ENCODE measurements at regions of chr2 and their contacts with region 1.

Region 1: DNA sequence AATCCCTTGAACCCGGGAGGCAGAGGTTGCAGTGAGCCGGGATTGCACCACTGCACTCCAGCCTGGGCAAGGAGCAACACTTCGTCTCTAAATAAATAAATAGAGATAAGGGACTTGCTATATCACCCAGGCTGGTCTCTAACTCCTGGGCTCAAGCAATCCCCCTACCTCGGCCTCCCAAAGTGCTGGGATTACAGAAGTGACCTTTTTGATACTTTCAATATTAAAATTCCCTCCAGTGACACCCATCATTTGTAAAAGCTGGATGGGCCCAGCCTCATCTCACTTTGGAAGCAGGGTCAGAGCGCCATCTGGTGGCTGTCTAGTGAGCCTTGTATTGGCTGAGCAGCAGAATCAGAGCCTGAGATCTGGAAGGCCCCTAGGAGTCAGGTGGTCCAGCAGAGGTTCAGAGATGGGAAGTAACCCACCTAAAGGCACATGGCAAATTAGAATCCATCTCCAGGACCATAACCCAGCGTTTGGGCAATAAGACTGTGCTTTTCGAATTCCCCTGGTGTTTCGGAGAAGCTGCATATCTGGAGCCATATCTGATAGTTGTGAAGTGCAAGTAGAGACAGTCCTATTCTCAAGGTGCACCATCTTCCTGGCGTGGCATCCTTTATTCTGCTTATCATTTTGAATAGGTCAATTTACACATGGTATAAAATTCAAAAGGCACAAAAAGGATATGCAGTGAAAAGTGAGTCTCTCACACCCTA is 18.3 kb upstream of the SLC35F6 start:
- DNase-seq: peak; percentile 84 to 88
- ATAC-seq: peak; percentile 89 to 94
- H3K4me3 ChIP-seq: no peak overlapping the region
- H3K27ac ChIP-seq: peak overlapping the region; percentile 53 to 94; a peak in 5 of 6 replicates
- H3K4me1 ChIP-seq: peaks cover 41% of the 10 kb centered on the region
- CTCF ChIP-seq: peak; percentile 99
- EP300 ChIP-seq: no peak
- POLR2A ChIP-seq: no peak
- RAD21 ChIP-seq: peak; percentile 100

Region 2: DNA sequence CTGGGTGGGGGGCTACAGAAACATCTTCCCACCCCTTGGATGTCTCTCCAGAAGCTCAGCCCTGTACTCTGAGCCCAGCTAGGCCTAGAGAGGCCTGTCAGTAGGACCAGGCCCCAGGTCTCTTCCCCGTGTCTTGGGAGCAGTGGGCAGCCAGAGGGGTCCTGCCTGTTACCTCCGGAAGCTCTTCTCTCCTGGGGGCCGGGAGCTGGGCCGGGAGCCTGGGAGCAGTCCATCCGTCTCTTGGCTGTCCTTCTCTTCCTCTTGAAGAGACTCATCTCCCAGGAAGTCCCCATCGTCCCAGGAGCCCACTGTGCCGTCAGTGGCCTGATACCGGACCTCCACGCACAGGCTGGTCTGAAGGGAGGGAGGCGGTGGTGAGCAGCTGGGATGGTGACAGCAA is 229.5 kb before region 1 on chr2:
- CTCF ChIA-PET with region 1: interaction called, 47 read pairs
- POLR2A ChIA-PET with region 1: no interaction called
- DNase-seq: no peak
- ATAC-seq: no peak
- H3K4me3 ChIP-seq: no peak overlapping the region
- H3K27ac ChIP-seq: no peak overlapping the region
- H3K4me1 ChIP-seq: no peaks in the 10 kb centered on the region
- CTCF ChIP-seq: no peak
- EP300 ChIP-seq: no peak
- POLR2A ChIP-seq: no peak
- RAD21 ChIP-seq: no peak

Region 3: DNA sequence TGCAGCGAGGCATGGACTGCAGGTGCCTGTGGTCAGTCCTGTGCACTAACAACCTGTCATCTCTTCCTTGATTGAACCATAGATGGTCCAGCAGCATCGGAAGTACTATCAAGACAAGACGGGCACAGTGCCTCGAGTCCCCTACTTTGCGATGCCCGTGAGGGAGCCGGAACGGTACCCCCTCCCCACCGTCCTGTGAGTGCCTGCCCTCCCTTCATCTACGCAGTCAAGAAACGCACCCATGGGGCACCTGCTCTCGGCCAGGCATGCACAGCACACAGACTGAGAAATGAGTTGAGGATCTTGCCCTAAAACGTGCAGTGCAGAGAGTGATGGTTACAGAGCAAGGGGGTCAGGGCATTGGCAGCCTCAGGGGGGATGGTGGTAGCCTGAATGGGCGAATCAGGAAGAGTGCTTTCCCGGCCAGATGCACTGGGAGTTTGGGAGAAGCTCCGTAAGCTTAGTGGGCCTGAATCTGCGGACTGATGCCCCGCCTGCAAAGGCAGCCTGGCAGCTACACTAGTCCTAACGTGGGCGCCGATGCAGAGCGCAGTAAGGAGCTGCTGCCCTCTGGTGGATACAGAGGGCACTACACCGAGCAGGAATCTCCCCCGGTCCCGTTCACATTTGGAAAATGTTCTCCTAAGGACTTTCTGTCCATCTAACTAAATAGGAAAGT is 168.2 kb before region 1 on chr2:
- CTCF ChIA-PET with region 1: interaction called, 175 read pairs
- POLR2A ChIA-PET with region 1: no interaction called
- DNase-seq: peak; percentile 71 to 95
- ATAC-seq: peak; percentile 73 to 93
- H3K4me3 ChIP-seq: no peak overlapping the region
- H3K27ac ChIP-seq: peak overlapping the region in 1 of 2 experiments; percentile 47; a peak in 3 of 6 replicates
- H3K4me1 ChIP-seq: peaks cover 4% of the 10 kb centered on the region; the same call in 2 of the 3 replicates
- CTCF ChIP-seq: peak; percentile 98
- EP300 ChIP-seq: no peak
- POLR2A ChIP-seq: no peak
- RAD21 ChIP-seq: peak; percentile 93 to 96

Region 4: GRCh38 chr2:26623541-26624396 is 122.0 kb before region 1 on chr2:
- CTCF ChIA-PET with region 1: interaction called, 736 read pairs
- POLR2A ChIA-PET with region 1: no interaction called
- DNase-seq: no peak
- ATAC-seq: peak; percentile 17 to 32; a peak in 2 of 6 replicates
- H3K4me3 ChIP-seq: no peak overlapping the region
- H3K27ac ChIP-seq: peak overlapping the region in 1 of 2 experiments; percentile 47; a peak in 3 of 6 replicates
- H3K4me1 ChIP-seq: peaks cover 7% of the 10 kb centered on the region; the same call in 2 of the 3 replicates
- CTCF ChIP-seq: no peak
- EP300 ChIP-seq: no peak
- POLR2A ChIP-seq: no peak
- RAD21 ChIP-seq: no peak

Region 5: GRCh38 chr2:26652361-26653041 is 93.3 kb before region 1 on chr2:
- CTCF ChIA-PET with region 1: interaction called, 13 read pairs
- POLR2A ChIA-PET with region 1: no interaction called
- DNase-seq: no peak
- ATAC-seq: no peak
- H3K4me3 ChIP-seq: no peak overlapping the region
- H3K27ac ChIP-seq: peak overlapping the region in 1 of 2 experiments; percentile 36; a peak in 2 of 6 replicates
- H3K4me1 ChIP-seq: no peaks in the 10 kb centered on the region
- CTCF ChIP-seq: no peak
- EP300 ChIP-seq: no peak
- POLR2A ChIP-seq: no peak
- RAD21 ChIP-seq: no peak

Region 6: GRCh38 chr2:26712486-26713465 is 33.0 kb before region 1 on chr2:
- CTCF ChIA-PET with region 1: interaction called, 23 read pairs
- POLR2A ChIA-PET with region 1: no interaction called
- DNase-seq: no peak
- ATAC-seq: peak; percentile 18 to 24; a peak in 3 of 6 replicates
- H3K4me3 ChIP-seq: no peak overlapping the region
- H3K27ac ChIP-seq: peak overlapping the region in 1 of 2 experiments; percentile 94; a peak in 4 of 6 replicates
- H3K4me1 ChIP-seq: peaks cover 35% of the 10 kb centered on the region
- CTCF ChIP-seq: no peak
- EP300 ChIP-seq: no peak
- POLR2A ChIP-seq: no peak
- RAD21 ChIP-seq: no peak

Region 7: GRCh38 chr2:26764078-26764887 is 18.5 kb after region 1 on chr2 and contains the start of gene SLC35F6:
- CTCF ChIA-PET with region 1: interaction called, 38 read pairs
- POLR2A ChIA-PET with region 1: no interaction called
- DNase-seq: peak; percentile 86 to 88
- ATAC-seq: peak; percentile 92 to 93
- H3K4me3 ChIP-seq: peak within 1 kb of the TSS; percentile 96
- H3K27ac ChIP-seq: peak within 1 kb of the TSS; percentile 95 to 96
- H3K4me1 ChIP-seq: peaks cover 52% of the 10 kb centered on the region
- CTCF ChIP-seq: no peak
- EP300 ChIP-seq: no peak
- POLR2A ChIP-seq: peak; percentile 79
- RAD21 ChIP-seq: no peak
- polyA plus RNA-seq, gene SLC35F6: 41.3 and 55.7 TPM in 2 replicates

Region 8: DNA sequence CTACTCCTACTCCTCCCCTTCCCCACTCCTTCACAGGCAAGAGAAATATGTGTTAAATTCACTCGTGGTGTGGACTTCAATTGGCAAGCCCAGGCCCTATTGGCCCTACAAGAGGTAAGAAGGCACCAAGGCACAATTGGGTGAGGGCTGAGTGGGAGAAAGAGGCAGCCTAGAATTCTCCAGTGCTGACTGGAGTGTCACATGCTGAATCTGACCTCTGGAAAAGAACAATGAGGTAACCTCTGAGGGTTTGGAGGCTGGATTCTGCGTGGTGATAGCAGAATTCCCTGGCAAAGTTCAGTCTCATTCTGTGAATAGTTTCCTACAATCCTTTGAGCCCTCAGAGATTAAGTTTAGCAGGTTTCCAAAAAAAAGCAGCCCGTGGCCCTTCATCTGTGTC is 47.0 kb after region 1 on chr2:
- CTCF ChIA-PET with region 1: no interaction called
- POLR2A ChIA-PET with region 1: no interaction called
- DNase-seq: no peak
- ATAC-seq: no peak
- H3K4me3 ChIP-seq: no peak overlapping the region
- H3K27ac ChIP-seq: no peak overlapping the region
- H3K4me1 ChIP-seq: peaks cover 3% of the 10 kb centered on the region; the same call in 2 of the 3 replicates
- CTCF ChIP-seq: no peak
- EP300 ChIP-seq: no peak
- POLR2A ChIP-seq: no peak
- RAD21 ChIP-seq: no peak

Measured in A549 (cell line).